ENCODE measurements at regions of chr4 and their contacts with region 1.

Region 1: DNA sequence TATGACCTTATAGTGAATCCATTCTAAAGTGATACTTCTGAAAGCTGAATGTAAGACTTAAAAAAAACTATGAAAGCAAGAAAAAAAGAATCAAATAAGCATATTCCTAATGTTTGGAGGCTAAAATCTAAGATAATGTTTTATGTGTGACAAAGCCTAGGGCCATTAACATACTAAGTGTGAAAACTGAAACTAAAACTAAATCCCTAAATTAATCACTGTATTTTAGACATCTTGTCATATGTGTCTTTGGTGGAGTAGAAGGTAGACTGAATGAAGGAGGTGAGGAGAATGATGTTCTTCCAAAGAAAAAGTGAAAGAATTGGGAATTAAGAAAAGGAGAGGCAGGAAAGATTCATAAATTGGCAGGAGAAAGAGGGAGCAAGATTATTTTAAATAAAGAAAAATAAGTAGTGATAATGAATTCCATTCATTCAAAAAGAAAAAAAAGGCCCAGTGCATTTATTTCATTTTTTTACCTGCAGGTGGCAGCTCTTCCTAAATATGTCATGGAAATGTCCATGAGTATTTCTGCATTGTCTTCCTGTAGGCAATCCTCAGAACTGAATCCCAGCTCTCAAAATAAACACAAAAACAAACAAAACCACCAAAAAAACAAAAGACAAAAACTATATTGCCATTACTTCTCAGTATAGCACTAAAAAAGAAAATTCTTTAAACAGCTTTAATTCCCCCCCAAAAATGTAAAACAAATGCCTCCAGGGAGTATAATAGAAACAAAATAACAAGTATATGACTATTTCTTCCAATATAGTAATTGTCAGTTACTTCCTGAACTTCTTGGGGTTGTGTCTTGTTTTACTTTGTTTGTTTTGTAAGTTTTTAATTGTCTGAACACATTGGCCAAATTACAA is 17.0 kb upstream of the AP1AR start:
- DNase-seq: peak; percentile 56
- H3K4me3 ChIP-seq: no peak overlapping the region; a peak in 1 of 4 replicates
- H3K27ac ChIP-seq: no peak overlapping the region
- H3K4me1 ChIP-seq: no peaks in the 10 kb centered on the region; a peak in 1 of 4 replicates
- H3K27me3 ChIP-seq: no peaks in the 10 kb centered on the region
- CTCF ChIP-seq: peak; percentile 59
- EP300 ChIP-seq: no peak
- RAD21 ChIP-seq: peak; percentile 64

Region 2: DNA sequence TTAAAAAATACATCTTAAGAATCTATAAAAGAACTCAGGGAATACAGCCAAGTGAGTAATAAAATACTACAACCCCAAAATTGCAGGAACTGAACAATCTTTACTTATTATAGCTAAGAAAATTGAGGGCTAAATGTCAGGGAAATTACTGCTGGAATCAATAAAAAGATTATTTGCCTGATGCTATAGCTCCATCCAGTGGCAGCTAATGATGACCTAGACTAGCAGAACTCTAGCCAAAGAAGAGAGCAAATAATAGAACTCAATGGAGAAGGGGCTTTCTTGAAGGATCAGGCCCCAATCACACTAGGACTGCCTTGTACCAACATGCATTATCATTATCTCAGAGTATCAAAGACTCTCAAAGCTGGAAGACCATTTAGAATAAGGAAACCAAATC is 154.4 kb before region 1 on chr4:
- CTCF ChIA-PET with region 1: no interaction called
- POLR2A ChIA-PET with region 1: no interaction called
- DNase-seq: peak; percentile 13
- H3K4me3 ChIP-seq: no peak overlapping the region; a peak in 1 of 4 replicates
- H3K27ac ChIP-seq: no peak overlapping the region
- H3K4me1 ChIP-seq: no peaks in the 10 kb centered on the region; a peak in 1 of 4 replicates
- H3K27me3 ChIP-seq: peaks cover 7% of the 10 kb centered on the region; the same call in 1 of the 2 replicates
- CTCF ChIP-seq: peak; percentile 62
- EP300 ChIP-seq: no peak
- RAD21 ChIP-seq: peak; percentile 61

Region 3: GRCh38 chr4:112183252-112183651 is 31.4 kb before region 1 on chr4:
- CTCF ChIA-PET with region 1: no interaction called
- POLR2A ChIA-PET with region 1: no interaction called
- DNase-seq: no peak
- H3K4me3 ChIP-seq: no peak overlapping the region
- H3K27ac ChIP-seq: no peak overlapping the region
- H3K4me1 ChIP-seq: no peaks in the 10 kb centered on the region; a peak in 2 of 4 replicates
- H3K27me3 ChIP-seq: no peaks in the 10 kb centered on the region
- CTCF ChIP-seq: no peak
- EP300 ChIP-seq: no peak
- RAD21 ChIP-seq: no peak

Region 4: GRCh38 chr4:112231779-112232713 is 17.4 kb after region 1 on chr4 and contains the start of gene AP1AR:
- CTCF ChIA-PET with region 1: interaction called, 24 read pairs
- POLR2A ChIA-PET with region 1: no interaction called
- DNase-seq: peak; percentile 92
- H3K4me3 ChIP-seq: peak within 1 kb of the TSS; percentile 87 to 97
- H3K27ac ChIP-seq: peak within 1 kb of the TSS; percentile 96 to 98
- H3K4me1 ChIP-seq: peaks cover 7 to 9% of the 10 kb centered on the region in 2 experiments; a peak in 3 of 4 replicates
- H3K27me3 ChIP-seq: no peaks in the 10 kb centered on the region
- CTCF ChIP-seq: peak; percentile 49
- EP300 ChIP-seq: no peak
- RAD21 ChIP-seq: peak; percentile 23; the same call in 1 of the 2 replicates
- polyA plus RNA-seq, gene AP1AR: 8.5 and 11.4 TPM in 2 replicates

Measured in SK-N-SH (cell line).